Sciatic nerve (tissue), 2 donors: ENCODE measurements at regions of chr11 and their contacts with region 1.

Region 1: DNA sequence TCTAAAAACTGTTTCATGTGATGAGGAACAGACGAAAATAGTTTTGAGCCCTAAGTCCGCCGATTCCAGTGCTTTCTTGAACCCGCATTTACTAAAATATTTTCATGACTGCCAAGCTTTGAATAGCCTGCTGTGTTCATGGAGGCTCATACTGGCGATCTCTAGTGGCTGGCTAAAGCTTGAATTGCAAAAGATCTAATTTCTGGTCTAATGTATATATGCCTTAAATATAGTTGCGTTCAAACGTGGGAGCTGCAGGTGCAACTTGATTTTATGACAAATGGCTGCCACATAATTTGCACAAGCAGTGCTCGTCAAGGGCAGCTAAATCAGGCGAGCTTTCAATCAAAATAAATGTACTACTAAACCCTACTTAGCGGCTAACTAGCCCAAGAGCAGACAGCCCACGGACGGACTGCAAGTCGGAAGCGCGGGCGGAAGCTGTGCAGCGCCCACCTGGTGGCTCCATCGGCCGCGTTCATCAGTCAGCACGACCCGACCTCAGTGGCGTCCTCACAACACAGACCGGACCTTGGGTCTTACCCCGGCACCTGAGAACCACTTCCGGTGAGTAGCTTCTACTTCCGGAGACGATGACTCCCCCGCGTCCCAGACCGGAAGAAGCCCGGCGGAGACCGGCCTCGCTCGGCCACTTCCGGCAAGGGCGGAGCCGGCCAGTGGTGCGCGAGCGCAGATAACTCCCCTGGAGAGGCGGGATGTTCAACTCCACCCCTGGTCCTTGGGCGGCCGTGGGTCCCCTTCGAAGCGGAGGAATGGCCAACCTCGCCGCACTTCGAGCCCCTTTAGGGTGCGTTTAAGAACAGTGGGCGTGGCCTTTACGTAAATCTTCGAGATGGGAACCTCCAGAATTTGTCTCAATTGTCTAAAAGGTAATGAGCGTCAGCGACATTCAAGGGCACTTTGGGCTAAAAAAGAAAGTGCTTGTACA is 6.1 kb downstream of the RPL27A start:
- DNase-seq: peak; percentile 95
- ATAC-seq: peak; percentile 99

Region 2: GRCh38 chr11:8964324-8965320 is 275.9 kb after region 1 on chr11 and contains the start of gene TMEM9B:
- intact Hi-C with region 1: loop called (anchors 10 kb)
- DNase-seq: peak; percentile 93
- ATAC-seq: peak; percentile 98
- total RNA-seq, gene TMEM9B: 44.0 TPM